ENCODE measurements at regions of chr12 and their contacts with region 1.

Region 1: DNA sequence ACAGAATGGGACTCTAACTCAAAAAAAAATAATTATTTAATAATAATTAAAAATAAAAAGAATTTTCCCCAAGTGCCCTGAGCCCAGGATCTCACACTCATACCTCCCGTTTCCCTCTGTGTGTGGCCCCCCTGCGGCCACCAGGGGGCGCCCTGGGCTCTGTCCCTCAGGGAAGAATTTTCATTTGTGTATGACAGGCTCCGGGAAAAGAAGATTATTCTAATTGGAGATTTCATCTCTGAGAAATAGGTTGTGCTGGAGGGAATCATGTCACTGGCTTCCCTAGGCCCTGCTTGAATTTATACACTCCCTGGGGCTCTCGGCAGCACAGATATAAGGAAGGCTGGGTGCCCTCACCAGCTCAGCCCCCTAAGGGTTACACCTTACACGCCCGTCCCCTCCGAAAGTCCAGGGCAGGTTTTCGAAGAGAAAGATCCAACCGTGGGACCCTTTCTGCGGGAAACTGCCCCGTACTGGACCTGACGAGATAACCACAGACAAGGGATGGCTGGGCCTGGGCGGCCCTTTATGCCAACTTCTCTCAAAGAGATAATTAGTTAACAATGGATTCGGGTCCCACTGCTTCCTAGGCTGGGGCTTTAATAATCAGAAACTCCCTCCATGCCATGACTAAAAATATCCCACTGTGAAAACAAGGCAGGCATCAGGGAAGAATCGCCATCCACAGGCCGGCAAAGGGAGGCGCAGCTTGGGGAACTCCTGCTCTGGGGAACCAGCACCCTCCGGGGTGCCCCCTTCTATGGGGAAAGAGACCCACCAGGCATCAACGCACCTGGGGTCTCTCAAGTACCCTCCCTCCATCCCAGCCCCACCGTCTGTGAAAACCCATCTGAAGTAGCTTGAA is 80.7 kb downstream of the KDM2B start:
- DNase-seq: peak; percentile 59
- ATAC-seq: peak; percentile 98
- H3K4me3 ChIP-seq: no peak overlapping the region
- H3K27ac ChIP-seq: no peak overlapping the region
- H3K4me1 ChIP-seq: no peaks in the 10 kb centered on the region
- H3K27me3 ChIP-seq: no peaks in the 10 kb centered on the region
- CTCF ChIP-seq: peak; percentile 91
- POLR2A ChIP-seq: no peak
- RAD21 ChIP-seq: peak; percentile 80

Region 2: GRCh38 chr12:121536899-121537813 is 37.0 kb after region 1 on chr12:
- CTCF ChIA-PET with region 1: no interaction called
- POLR2A ChIA-PET with region 1: no interaction called
- dilution Hi-C with region 1: no loop called
- in situ Hi-C with region 1: no loop called
- intact Hi-C with region 1: loop called (anchors 2 kb)
- DNase-seq: peak; percentile 77
- ATAC-seq: peak; percentile 35
- H3K4me3 ChIP-seq: peak overlapping the region; percentile 11
- H3K27ac ChIP-seq: peak overlapping the region; percentile 49
- H3K4me1 ChIP-seq: peaks cover 31% of the 10 kb centered on the region
- H3K27me3 ChIP-seq: no peaks in the 10 kb centered on the region
- CTCF ChIP-seq: no peak
- POLR2A ChIP-seq: no peak
- RAD21 ChIP-seq: no peak

Region 3: DNA sequence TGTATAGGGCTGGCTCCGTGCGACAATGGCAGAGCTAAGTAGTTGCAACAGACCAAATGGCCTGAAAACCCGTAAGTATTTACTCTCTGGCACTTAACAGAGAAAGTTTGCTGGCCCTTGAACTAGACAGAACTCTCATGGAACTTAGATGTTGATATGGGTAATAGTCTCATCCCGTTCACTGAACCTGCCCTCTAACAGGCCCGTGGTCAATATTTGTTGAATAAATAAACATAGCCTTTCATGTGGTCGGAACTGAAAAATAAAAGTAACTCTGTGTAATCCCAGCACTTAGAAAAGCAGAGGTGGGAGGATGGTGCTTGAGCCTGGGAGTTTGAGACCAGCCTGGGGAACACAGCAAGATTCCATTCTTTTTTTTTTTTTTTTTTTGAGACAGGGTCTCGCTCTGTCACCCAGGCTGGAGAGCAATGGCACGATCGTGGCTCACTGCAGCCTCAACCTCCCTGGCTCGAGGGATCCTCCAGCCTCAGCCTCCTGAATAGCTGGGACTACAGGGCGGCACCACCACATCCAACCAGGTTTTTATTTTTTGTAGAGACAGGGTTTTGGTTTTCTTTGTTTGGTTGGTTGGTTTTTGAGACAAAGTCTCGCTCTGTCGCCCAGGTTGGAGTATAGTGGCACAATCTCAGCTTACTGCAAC is 50.9 kb after region 1 on chr12:
- CTCF ChIA-PET with region 1: interaction called, 4 read pairs
- POLR2A ChIA-PET with region 1: no interaction called
- dilution Hi-C with region 1: no loop called
- in situ Hi-C with region 1: no loop called
- intact Hi-C with region 1: loop called (anchors 5 kb)
- DNase-seq: no peak
- ATAC-seq: no peak
- H3K4me3 ChIP-seq: no peak overlapping the region
- H3K27ac ChIP-seq: no peak overlapping the region
- H3K4me1 ChIP-seq: no peaks in the 10 kb centered on the region
- H3K27me3 ChIP-seq: no peaks in the 10 kb centered on the region
- CTCF ChIP-seq: no peak
- POLR2A ChIP-seq: no peak
- RAD21 ChIP-seq: no peak

Region 4: DNA sequence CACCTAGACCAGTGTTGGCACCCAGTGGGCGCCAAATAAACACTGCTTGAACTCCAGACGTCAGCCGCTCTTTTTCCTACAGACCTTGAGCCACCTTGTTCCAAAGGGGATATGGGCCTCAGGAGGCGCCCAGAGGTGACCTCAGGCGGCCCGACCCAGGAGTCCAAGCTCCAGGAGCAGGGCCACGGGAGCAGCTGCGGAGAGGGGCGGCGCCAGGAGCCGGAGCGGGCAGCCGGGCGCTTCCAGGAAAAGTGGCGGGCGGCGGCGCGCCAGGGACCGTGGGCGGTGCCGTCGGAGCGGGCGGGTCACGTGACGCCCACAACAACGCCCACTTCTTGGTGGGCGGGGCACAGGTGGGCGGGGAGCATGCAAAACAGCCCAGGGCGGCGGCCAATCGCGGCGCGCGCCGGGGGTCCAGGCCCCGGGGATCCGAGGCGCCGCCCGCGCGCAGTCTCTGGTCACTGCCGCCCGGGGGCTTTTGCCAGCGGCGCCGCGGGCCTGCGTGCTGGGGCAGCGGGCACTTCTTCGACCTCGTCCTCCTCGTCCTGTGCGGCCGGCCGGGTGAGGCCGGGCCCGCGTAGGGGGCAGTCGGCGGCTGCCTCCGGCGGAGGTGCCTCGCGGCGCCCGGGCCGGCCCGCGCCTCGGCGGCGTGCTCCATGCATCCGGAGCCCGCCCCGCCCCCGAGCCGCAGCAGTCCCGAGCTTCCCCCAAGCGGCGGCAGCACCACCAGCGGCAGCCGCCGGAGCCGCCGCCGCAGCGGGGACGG is 126.1 kb after region 1 on chr12 and contains the start of gene ORAI1:
- CTCF ChIA-PET with region 1: no interaction called
- POLR2A ChIA-PET with region 1: no interaction called
- dilution Hi-C with region 1: no loop called
- in situ Hi-C with region 1: no loop called
- intact Hi-C with region 1: loop called (anchors 1 kb)
- DNase-seq: peak; percentile 91
- ATAC-seq: peak; percentile 91
- H3K4me3 ChIP-seq: peak within 1 kb of the TSS; percentile 73
- H3K27ac ChIP-seq: peak within 1 kb of the TSS; percentile 71
- H3K4me1 ChIP-seq: peaks cover 15% of the 10 kb centered on the region
- H3K27me3 ChIP-seq: no peaks in the 10 kb centered on the region
- CTCF ChIP-seq: peak; percentile 25
- POLR2A ChIP-seq: no peak
- RAD21 ChIP-seq: no peak
- total RNA-seq, gene ORAI1: 3.9 and 4.4 TPM in 2 replicates

Region 5: DNA sequence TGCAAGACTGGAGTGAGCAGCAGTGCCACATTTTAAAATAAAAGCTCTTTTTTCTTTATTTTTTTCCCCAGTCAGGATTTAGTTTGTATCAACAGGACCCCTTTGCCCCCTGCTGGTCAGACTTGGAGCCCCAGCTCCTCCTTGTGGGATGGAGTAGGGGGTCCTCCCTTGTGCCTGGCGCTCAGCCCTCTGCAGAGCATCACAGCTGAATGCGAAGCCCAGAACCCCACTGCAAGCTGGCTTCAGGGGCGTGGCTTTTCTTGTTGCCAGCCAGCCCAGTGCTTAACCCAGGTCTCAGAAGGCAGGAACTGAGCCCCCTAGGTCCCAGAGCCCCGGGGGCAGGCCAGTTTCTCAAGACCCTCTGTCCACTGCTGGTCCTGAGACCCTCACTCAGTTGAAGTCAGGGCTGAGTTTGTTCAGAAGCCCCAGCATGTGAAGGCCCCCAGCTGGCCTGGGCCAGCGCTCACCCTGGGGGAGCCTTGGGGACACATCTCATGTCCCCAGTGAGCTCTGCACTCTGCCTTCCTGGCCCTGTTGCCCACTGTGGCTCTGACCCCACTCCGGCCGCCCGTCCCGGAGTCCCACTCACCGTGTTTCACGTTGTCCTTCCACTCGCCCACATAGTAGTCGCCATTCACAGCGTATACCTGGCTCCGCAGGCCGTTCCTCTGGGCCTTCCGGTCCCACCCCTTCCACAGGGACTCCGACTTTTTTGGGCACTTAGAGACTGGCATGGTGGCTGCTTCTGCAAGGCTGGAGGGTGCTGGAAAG is 168.8 kb after region 1 on chr12:
- CTCF ChIA-PET with region 1: interaction called, 3 read pairs
- POLR2A ChIA-PET with region 1: no interaction called
- dilution Hi-C with region 1: no loop called
- in situ Hi-C with region 1: no loop called
- intact Hi-C with region 1: loop called (anchors 5 kb)
- DNase-seq: peak; percentile 36
- ATAC-seq: peak; percentile 53
- H3K4me3 ChIP-seq: no peak overlapping the region
- H3K27ac ChIP-seq: no peak overlapping the region
- H3K4me1 ChIP-seq: peaks cover 3% of the 10 kb centered on the region
- H3K27me3 ChIP-seq: no peaks in the 10 kb centered on the region
- CTCF ChIP-seq: peak; percentile 60
- POLR2A ChIP-seq: no peak
- RAD21 ChIP-seq: peak; percentile 66

Region 6: DNA sequence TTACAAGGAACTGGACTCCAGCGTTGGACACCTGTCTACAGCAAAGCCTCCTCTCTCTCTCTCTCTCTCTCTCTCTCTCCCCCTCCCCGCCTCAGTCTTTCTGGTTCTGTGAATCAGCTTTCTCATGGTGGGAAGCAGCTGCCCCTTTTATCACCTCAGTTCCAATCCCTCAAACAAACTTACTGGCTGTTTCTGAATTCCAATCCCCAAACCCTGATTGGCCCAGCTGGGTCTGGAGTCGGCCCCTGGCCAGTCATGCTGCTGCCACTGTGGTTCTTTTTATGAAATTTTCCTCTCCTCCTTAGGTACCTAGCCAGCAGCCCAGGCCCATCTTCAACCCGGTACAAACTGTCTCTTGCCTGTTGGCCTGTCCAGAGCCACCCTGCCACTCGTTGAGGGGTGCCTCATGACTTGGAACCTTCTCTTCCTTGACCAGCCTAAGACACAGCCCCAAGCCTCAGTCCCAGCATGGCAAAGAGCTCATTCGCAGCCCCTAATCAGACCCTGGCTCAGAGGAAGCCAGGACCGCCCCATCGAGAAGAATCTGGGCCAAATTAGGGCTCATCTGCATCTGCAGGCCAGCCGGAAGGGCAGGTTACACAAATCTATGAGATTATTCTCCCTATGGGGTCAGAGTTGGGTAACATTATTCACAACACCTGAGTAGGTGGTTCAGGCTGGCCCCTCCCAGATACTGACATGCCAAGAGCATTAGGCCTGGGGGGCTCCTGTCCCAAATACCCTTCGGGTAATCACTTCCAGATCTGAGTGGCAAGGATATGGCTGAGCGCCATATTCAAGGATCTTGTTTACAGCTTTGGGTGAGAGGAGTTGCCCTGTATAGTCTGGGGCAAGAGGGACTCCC is 178.8 kb after region 1 on chr12:
- CTCF ChIA-PET with region 1: no interaction called
- POLR2A ChIA-PET with region 1: no interaction called
- dilution Hi-C with region 1: no loop called
- in situ Hi-C with region 1: no loop called
- intact Hi-C with region 1: loop called (anchors 1 kb)
- DNase-seq: peak; percentile 50
- ATAC-seq: peak; percentile 65; the same call in 1 of the 2 replicates
- H3K4me3 ChIP-seq: no peak overlapping the region
- H3K27ac ChIP-seq: no peak overlapping the region
- H3K4me1 ChIP-seq: peaks cover 2% of the 10 kb centered on the region; the same call in 1 of the 2 replicates
- H3K27me3 ChIP-seq: no peaks in the 10 kb centered on the region
- CTCF ChIP-seq: no peak
- POLR2A ChIP-seq: no peak
- RAD21 ChIP-seq: no peak

Measured in IMR-90 (cell line).